HEK293 (cell line): ENCODE measurements at regions of chr19 and their contacts with region 1.

Region 1: GRCh38 chr19:51660975-51661600 is 14.5 kb upstream of the SIGLEC14 start:
- H3K4me3 ChIP-seq: no peak overlapping the region
- H3K27ac ChIP-seq: no peak overlapping the region
- H3K4me1 ChIP-seq: no peaks in the 10 kb centered on the region
- CTCF ChIP-seq: no peak

Region 2: GRCh38 chr19:50686310-50687032 is 974.6 kb before region 1 on chr19:
- CTCF ChIA-PET with region 1: no interaction called
- POLR2A ChIA-PET with region 1: no interaction called
- H3K4me3 ChIP-seq: no peak overlapping the region
- H3K27ac ChIP-seq: no peak overlapping the region
- H3K4me1 ChIP-seq: no peaks in the 10 kb centered on the region
- CTCF ChIP-seq: no peak

Region 3: GRCh38 chr19:51514866-51515481 is 146.1 kb before region 1 on chr19:
- CTCF ChIA-PET with region 1: interaction called, 10 read pairs
- POLR2A ChIA-PET with region 1: no interaction called
- H3K4me3 ChIP-seq: no peak overlapping the region
- H3K27ac ChIP-seq: no peak overlapping the region
- H3K4me1 ChIP-seq: no peaks in the 10 kb centered on the region
- CTCF ChIP-seq: no peak

Region 4: DNA sequence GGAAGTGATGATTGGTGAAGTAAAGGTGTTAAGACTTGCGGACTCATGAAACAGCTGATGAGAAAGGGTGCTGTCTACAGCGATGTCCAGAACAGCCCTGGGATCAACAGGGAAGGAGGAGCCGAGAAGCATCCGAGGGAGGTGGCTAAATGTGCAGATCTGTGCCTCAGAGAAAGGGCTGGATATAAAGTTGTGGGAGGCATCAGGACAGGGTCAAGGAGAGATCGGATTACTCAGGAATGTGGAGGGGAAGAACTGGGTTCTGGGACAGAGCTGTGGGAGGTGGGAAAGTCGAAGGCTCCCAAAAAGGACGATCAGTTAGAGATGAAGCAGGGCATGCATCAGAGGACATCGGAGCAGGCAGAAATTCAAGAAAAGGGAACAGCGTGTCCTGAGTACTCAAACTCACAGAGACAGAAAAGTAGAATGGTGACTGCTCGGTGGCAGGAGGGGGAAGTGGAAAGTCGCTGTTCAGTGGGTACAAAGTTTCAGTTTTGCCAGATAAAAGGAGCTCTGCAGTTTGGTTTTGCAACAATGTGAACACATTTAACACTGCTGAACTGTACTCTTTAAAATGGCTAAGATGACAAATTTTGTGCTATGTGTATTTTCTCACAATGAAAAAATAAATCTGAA is 16.3 kb before region 1 on chr19:
- CTCF ChIA-PET with region 1: interaction called, 35 read pairs
- POLR2A ChIA-PET with region 1: interaction called, 3 read pairs
- H3K4me3 ChIP-seq: no peak overlapping the region
- H3K27ac ChIP-seq: no peak overlapping the region
- H3K4me1 ChIP-seq: no peaks in the 10 kb centered on the region
- CTCF ChIP-seq: no peak

Region 5: DNA sequence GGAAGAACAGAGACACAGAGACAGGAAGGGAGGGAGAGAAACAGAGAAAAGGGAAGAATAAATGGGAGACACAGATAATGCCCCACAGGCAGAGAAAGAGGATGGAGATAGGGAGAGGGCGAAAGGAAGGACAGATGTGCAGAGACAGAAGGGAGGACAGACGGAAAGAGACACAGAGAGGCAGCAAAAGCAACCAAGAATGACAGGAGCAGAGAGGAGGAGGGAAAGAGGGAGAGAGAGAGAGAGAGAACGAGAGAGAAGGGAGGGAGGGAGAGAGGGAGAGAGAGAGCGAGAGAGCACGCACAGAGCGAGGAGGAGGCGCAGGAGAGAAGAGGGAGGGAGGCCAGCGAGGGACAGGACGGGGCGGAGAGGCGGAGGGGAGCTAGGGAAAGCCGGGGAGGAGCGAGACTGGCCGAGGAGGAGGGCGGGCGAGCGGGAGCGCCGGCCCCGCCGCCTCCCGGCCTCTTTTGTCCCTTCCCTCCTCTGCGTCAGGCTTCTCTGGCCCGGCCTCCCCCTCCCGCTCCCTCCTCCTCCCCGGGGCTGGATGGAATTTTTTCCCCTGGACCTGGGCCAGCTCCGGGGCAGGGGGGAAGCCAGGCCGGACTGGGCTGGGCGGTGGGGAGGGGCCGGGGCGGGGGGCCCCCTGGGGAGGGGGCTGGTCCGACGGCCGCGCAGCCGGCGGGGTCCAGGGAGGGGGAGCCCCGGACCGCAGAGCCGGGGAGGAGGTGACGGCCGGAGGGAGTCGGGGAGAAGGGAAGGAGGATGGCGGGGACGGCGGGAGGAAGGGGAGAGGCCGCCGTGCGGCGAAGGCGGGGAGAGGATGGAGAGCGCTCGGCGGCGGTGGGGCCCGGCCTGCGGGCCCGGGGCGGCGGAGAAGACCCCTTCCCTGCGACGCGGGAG is 27.8 kb after region 1 on chr19:
- CTCF ChIA-PET with region 1: interaction called, 114 read pairs
- POLR2A ChIA-PET with region 1: interaction called, 3 read pairs
- H3K4me3 ChIP-seq: peak overlapping the region; percentile 83
- H3K27ac ChIP-seq: peak overlapping the region; percentile 91
- H3K4me1 ChIP-seq: peaks cover 17% of the 10 kb centered on the region
- CTCF ChIP-seq: peak; percentile 65; the same call in 1 of the 2 replicates